OCI-LY7 (cell line): ENCODE measurements at regions of chr12 and their contacts with region 1.

Region 1: GRCh38 chr12:46217541-46218321 is 51.1 kb downstream of the SLC38A1 start:
- DNase-seq: peak; percentile 89
- H3K4me3 ChIP-seq: peak overlapping the region; percentile 50
- H3K27ac ChIP-seq: peak overlapping the region; percentile 91
- H3K4me1 ChIP-seq: peaks cover 75% of the 10 kb centered on the region
- CTCF ChIP-seq: no peak

Region 2: GRCh38 chr12:45803652-45804594 is 413.8 kb before region 1 on chr12:
- CTCF ChIA-PET with region 1: no interaction called
- POLR2A ChIA-PET with region 1: no interaction called
- intact Hi-C with region 1: no loop called
- DNase-seq: no peak
- H3K4me3 ChIP-seq: no peak overlapping the region
- H3K27ac ChIP-seq: no peak overlapping the region
- H3K4me1 ChIP-seq: no peaks in the 10 kb centered on the region
- CTCF ChIP-seq: no peak

Region 3: GRCh38 chr12:46108721-46109120 is 109.0 kb before region 1 on chr12:
- CTCF ChIA-PET with region 1: no interaction called
- POLR2A ChIA-PET with region 1: interaction called, 4 read pairs
- intact Hi-C with region 1: loop called (anchors 2 kb)
- DNase-seq: peak; percentile 91
- H3K4me3 ChIP-seq: peak overlapping the region; percentile 32
- H3K27ac ChIP-seq: peak overlapping the region; percentile 92
- H3K4me1 ChIP-seq: peaks cover 56% of the 10 kb centered on the region
- CTCF ChIP-seq: no peak

Region 4: GRCh38 chr12:46205294-46205693 is 12.4 kb before region 1 on chr12:
- CTCF ChIA-PET with region 1: no interaction called
- POLR2A ChIA-PET with region 1: interaction called, 39 read pairs
- intact Hi-C with region 1: no loop called
- DNase-seq: no peak
- H3K4me3 ChIP-seq: no peak overlapping the region
- H3K27ac ChIP-seq: no peak overlapping the region
- H3K4me1 ChIP-seq: peaks cover 31% of the 10 kb centered on the region
- CTCF ChIP-seq: no peak